ENCODE measurements at regions of chr11 and their contacts with region 1.

Region 1: GRCh38 chr11:57800444-57801182 is 39.0 kb downstream of the CTNND1 start:
- DNase-seq: no peak
- H3K4me3 ChIP-seq: peak overlapping the region; percentile 5
- H3K27ac ChIP-seq: peak overlapping the region; percentile 84
- H3K4me1 ChIP-seq: peaks cover 83% of the 10 kb centered on the region
- H3K27me3 ChIP-seq: no peaks in the 10 kb centered on the region
- CTCF ChIP-seq: peak; percentile 92

Region 2: GRCh38 chr11:57641011-57641807 is 159.4 kb before region 1 on chr11:
- intact Hi-C with region 1: no loop called
- DNase-seq: no peak
- H3K4me3 ChIP-seq: no peak overlapping the region
- H3K27ac ChIP-seq: no peak overlapping the region
- H3K4me1 ChIP-seq: peaks cover 66% of the 10 kb centered on the region
- H3K27me3 ChIP-seq: peaks cover 8% of the 10 kb centered on the region
- CTCF ChIP-seq: peak; percentile 62

Region 3: DNA sequence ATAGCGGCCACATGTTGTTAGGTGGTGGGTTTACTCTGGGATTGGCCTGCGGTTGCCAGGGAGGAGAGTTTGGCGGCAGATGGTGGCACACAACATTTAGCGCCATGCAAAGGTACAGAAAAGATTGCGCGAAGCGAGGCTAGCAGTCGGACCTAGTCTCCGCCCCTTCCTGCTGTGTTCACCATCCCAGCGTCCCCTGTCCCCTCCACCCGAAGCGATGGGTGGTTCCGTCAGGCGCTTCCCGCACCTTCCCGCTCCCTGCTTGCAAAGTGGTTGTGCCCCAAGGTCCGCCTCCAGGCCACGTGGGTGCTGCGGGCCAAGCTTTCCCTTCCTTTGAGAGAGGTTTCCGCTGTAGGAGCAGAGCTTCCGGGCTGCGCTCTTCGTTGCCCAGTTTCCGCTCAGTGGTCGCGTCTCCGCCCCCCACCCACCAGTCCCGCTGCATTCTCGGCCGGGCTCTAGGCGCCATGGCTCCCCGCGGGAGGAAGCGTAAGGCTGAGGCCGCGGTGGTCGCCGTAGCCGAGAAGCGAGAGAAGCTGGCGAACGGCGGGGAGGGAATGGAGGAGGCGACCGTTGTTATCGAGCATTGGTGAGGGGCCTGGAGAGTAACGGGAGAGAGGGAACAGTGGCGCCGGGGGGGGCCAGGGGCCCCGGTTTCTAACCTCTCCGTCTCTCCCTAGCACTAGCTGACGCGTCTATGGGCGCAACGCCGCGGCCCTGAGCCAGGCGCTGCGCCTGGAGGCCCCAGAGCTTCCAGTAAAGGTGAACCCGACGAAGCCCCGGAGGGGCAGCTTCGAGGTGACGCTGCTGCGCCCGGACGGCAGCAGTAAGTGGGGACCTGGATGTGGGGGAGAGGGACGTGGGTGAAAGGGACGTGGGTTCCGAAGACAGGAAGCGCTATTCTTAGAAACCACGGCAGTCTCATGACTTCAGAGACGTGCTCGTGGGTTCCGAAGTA is 59.2 kb before region 1 on chr11 and contains the start of gene SELENOH:
- intact Hi-C with region 1: loop called (anchors 5 kb)
- DNase-seq: peak; percentile 95
- H3K4me3 ChIP-seq: peak within 1 kb of the TSS; percentile 76
- H3K27ac ChIP-seq: peak within 1 kb of the TSS; percentile 91
- H3K4me1 ChIP-seq: peaks cover 55% of the 10 kb centered on the region
- H3K27me3 ChIP-seq: no peaks in the 10 kb centered on the region
- CTCF ChIP-seq: no peak
- total RNA-seq, gene SELENOH: 78.8 TPM

Region 4: DNA sequence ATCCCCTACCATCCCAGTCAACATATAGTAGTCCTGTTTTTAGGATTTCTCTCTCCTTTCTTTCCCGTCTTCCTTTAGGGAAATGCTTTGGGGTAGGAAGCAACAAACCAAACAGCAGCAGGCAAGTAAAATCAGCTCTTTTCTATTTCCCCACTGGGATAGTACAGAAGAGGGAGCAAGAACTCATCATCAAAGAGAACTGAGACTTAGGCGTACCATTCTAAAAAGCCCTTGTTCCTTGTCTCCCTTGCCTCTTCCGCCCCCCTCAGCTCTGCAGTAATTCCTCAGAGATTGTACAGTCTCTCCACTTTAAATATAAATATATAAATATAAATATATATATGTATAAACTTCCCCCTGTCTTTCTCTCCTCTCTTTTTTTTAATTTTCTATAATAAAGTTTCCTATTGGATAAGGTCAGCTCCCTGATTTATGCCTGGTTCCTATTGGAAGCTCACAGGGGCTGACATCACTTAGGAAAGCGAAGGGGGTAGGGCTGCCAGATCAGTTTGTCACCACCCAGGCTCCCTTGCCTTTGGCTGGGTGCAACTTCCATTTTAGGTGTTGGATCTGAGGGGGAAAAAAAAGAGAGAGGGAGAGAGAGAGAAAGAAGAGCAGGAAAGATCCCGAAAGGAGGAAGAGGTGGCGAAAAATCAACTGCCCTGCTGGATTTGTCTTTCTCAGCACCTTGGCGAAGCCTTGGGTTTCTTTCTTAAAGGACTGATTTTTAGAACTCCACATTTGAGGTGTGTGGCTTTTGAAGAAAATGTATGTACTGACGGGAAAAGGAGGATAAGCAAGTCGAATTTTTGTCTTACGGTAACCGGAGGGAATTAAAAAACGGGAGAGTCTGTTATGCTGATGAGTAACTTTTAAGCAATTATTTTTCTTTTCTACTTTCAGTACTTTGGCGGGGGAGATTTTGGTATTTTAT is 39.0 kb before region 1 on chr11 and contains the start of gene CTNND1:
- intact Hi-C with region 1: loop called (anchors 5 kb)
- DNase-seq: peak; percentile 84
- H3K4me3 ChIP-seq: peak within 1 kb of the TSS; percentile 80
- H3K27ac ChIP-seq: peak within 1 kb of the TSS; percentile 94
- H3K4me1 ChIP-seq: peaks cover 38% of the 10 kb centered on the region
- H3K27me3 ChIP-seq: no peaks in the 10 kb centered on the region
- CTCF ChIP-seq: no peak
- total RNA-seq, gene CTNND1: 58.9 TPM